ENCODE measurements at regions of chr2 and their contacts with region 1.

Region 1: DNA sequence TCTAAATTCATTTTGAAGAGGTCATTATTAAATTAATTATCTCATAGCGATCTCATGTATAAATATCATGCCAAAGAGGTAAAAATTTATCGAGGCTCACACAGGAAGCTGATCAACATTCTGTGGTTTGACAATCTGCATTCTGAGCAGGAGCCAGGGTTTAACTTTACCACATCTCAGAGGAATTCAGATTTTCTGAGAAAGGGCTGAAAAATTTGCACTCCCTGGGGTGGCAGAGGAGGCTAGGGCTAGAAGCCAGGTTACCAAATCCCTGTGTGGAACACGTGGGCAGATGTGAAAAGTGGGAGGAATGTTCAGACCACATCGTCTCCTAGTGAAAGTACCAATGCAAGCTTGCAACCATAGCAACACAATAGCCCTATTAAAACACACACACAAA is 63.5 kb upstream of the CTLA4 start:
- DNase-seq: no peak
- H3K4me3 Mint-ChIP-seq: peak overlapping the region; percentile 19
- H3K27ac Mint-ChIP-seq: peak overlapping the region; percentile 76
- H3K4me1 Mint-ChIP-seq: peaks cover 80% of the 10 kb centered on the region
- H3K27me3 Mint-ChIP-seq: peaks cover 2% of the 10 kb centered on the region

Region 2: GRCh38 chr2:203276114-203276513 is 528.0 kb before region 1 on chr2:
- intact Hi-C with region 1: no loop called
- DNase-seq: no peak
- H3K4me3 Mint-ChIP-seq: no peak overlapping the region
- H3K27ac Mint-ChIP-seq: no peak overlapping the region
- H3K4me1 Mint-ChIP-seq: no peaks in the 10 kb centered on the region
- H3K27me3 Mint-ChIP-seq: no peaks in the 10 kb centered on the region

Region 3: GRCh38 chr2:203673933-203674332 is 130.1 kb before region 1 on chr2:
- intact Hi-C with region 1: loop called (anchors 2 kb)
- DNase-seq: peak; percentile 49
- H3K4me3 Mint-ChIP-seq: peak overlapping the region; percentile 61
- H3K27ac Mint-ChIP-seq: peak overlapping the region; percentile 90
- H3K4me1 Mint-ChIP-seq: peaks cover 33% of the 10 kb centered on the region
- H3K27me3 Mint-ChIP-seq: no peaks in the 10 kb centered on the region

Region 4: GRCh38 chr2:203763938-203764664 is 40.0 kb before region 1 on chr2:
- intact Hi-C with region 1: loop called (anchors 1 kb)
- DNase-seq: peak; percentile 20
- H3K4me3 Mint-ChIP-seq: peak overlapping the region; percentile 22
- H3K27ac Mint-ChIP-seq: peak overlapping the region; percentile 95
- H3K4me1 Mint-ChIP-seq: peaks cover 66% of the 10 kb centered on the region
- H3K27me3 Mint-ChIP-seq: no peaks in the 10 kb centered on the region

Region 5: GRCh38 chr2:203824057-203824456 is 20.0 kb after region 1 on chr2:
- intact Hi-C with region 1: loop called (anchors 1 kb)
- DNase-seq: no peak
- H3K4me3 Mint-ChIP-seq: no peak overlapping the region
- H3K27ac Mint-ChIP-seq: peak overlapping the region; percentile 79
- H3K4me1 Mint-ChIP-seq: peaks cover 48% of the 10 kb centered on the region
- H3K27me3 Mint-ChIP-seq: no peaks in the 10 kb centered on the region

Region 6: DNA sequence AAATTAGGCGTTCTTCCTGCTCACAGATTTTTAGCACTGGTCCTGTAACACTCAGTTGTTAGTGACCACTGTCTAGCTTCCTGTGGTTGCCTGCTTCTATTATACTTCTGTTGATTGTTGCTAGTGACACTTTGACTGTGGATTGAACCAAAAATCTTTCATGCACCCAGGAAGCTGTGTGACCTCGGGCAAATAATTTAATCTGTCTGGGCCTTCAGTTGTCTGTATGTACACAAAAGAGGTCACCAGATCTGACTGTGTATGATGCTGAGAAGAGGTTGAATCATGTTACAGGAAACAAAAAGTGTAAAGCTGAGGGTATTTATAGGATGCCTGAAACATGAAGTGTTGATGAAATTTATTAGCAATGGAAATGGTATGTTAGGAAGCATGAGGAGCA is 145.2 kb after region 1 on chr2:
- intact Hi-C with region 1: no loop called
- DNase-seq: no peak
- H3K4me3 Mint-ChIP-seq: peak overlapping the region; percentile 76
- H3K27ac Mint-ChIP-seq: peak overlapping the region; percentile 90
- H3K4me1 Mint-ChIP-seq: peaks cover 89% of the 10 kb centered on the region
- H3K27me3 Mint-ChIP-seq: no peaks in the 10 kb centered on the region